B cell (primary cell): ENCODE measurements at regions of chr4 and their contacts with region 1.

Region 1: GRCh38 chr4:89929425-89930159 is 34.9 kb downstream of the MMRN1 start:
- DNase-seq: peak; percentile 6
- ATAC-seq: no peak
- H3K4me3 ChIP-seq: no peak overlapping the region
- H3K4me3 Mint-ChIP-seq: peak overlapping the region; percentile 19
- H3K27ac ChIP-seq: no peak overlapping the region
- H3K27ac Mint-ChIP-seq: no peak overlapping the region
- H3K4me1 ChIP-seq: peaks cover 0 to 8% of the 10 kb centered on the region in 2 donors
- H3K4me1 Mint-ChIP-seq: peaks cover 9% of the 10 kb centered on the region
- H3K27me3 ChIP-seq: no peaks in the 10 kb centered on the region
- H3K27me3 Mint-ChIP-seq: peaks cover 32% of the 10 kb centered on the region
- CTCF ChIP-seq: no peak

Region 2: DNA sequence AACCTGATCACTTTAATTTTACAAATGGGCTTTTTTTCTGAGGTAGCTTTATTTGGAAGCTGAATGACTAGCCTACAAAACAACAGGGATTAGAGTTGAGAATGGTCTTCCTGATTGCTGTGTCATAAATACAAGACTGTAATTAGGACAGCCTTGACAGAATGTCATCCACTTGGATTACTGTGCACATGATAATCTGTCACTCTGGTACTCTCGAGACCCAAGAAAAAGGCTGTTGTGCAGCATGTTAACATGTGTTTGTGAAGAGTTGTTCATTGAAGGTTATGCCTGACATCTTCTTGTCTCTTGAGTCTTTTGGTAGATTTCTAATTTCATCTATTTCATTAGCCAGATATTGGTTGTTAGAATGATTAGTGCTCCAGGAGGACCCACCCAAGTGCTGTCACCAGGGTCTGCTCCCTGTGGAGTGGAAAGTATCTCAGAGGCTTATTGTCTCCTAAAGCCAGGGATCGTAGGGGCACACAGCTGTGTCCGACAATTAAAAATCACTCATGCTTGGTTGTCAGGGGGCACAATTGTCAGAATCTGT is 409.7 kb before region 1 on chr4:
- CTCF ChIA-PET with region 1: no interaction called
- POLR2A ChIA-PET with region 1: no interaction called
- intact Hi-C with region 1: no loop called
- DNase-seq: no peak
- ATAC-seq: no peak
- H3K4me3 ChIP-seq: no peak overlapping the region
- H3K4me3 Mint-ChIP-seq: no peak overlapping the region
- H3K27ac ChIP-seq: no peak overlapping the region
- H3K27ac Mint-ChIP-seq: no peak overlapping the region
- H3K4me1 ChIP-seq: no peaks in the 10 kb centered on the region
- H3K4me1 Mint-ChIP-seq: no peaks in the 10 kb centered on the region
- H3K27me3 ChIP-seq: no peaks in the 10 kb centered on the region
- H3K27me3 Mint-ChIP-seq: peaks cover 11% of the 10 kb centered on the region
- CTCF ChIP-seq: no peak

Region 3: DNA sequence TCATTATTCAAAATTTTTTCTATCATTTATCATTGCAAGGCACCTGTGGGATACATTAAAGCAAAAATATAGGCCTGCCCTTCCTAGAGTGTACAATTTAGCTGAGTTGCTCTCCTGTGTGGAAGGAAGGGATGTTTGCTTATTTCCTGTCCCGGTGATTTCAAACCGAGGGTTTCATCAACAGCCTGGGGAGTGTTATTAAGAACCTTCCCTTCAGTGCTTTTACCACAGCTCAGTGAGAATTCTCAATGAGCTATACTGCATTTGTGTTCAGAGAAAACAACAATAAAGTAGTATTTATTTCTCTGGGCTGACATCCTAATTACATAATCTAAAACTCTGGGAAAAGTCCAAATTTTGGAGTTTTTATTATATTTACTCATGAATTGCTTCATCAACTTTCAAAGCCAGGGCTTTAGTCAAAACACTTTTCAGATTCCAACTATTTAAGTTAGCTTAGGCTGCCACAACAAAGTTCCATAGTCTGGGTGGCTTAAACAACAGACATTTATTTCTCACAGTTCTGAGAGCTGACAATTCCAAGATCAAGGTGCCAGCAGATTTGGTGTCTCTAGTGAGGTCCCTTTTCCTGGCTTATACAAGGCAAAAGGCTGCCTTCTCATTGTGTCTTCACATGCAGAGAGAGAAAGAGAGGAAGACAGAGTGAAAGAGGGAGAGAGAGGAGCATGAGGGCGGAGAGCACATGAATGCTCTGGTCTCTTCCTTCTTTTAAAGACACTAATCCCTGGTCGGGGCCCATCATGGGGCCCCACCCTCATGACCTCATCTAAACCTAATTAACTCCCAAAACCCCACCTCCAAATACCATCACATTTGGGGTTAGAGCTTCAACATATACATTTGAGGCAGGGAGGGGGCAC is 27.7 kb after region 1 on chr4:
- CTCF ChIA-PET with region 1: no interaction called
- POLR2A ChIA-PET with region 1: no interaction called
- intact Hi-C with region 1: no loop called
- DNase-seq: no peak
- ATAC-seq: no peak
- H3K4me3 ChIP-seq: no peak overlapping the region
- H3K4me3 Mint-ChIP-seq: no peak overlapping the region
- H3K27ac ChIP-seq: no peak overlapping the region
- H3K27ac Mint-ChIP-seq: no peak overlapping the region
- H3K4me1 ChIP-seq: no peaks in the 10 kb centered on the region
- H3K4me1 Mint-ChIP-seq: no peaks in the 10 kb centered on the region
- H3K27me3 ChIP-seq: peaks cover 0 to 5% (median 0%) of the 10 kb centered on the region in 4 experiments
- H3K27me3 Mint-ChIP-seq: no peaks in the 10 kb centered on the region
- CTCF ChIP-seq: no peak

Region 4: DNA sequence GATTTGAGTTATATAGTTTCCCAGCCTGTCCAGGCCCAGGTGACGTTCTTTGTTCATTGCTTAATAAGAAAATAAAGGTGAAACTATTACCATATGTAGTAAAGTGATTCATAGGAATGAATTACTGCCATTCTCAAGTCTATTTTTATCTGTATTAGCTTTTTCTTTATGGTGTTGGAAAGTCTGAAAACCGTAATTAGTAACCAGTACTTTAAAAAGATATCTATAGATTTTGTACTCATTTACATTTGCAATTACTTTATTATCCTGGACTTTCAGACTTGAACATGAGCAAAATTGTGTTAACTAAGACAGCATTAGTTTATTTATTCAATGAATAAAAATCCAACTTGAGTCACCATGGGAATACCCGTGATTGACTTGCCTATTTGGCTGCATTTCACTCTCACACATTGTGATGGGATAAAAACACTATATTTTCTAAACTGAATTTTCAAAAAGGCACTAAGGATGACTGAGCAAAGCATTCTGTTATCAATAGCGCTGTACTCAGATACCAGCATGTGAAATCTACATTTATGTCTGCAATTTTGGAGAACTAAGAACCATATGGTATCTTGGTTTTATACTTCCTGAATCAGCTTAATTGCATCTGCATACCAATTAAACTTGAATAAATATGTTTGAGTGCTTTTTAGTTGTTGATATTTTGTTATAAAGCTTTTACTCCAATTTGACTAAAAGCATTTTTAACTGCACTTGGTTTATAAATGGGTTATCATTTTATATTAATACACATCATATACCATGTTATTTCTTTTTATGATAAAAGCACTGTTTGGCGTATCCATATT is 352.2 kb after region 1 on chr4:
- CTCF ChIA-PET with region 1: no interaction called
- POLR2A ChIA-PET with region 1: no interaction called
- intact Hi-C with region 1: loop called (anchors 10 kb)
- DNase-seq: no peak
- ATAC-seq: no peak
- H3K4me3 ChIP-seq: no peak overlapping the region
- H3K4me3 Mint-ChIP-seq: no peak overlapping the region
- H3K27ac ChIP-seq: no peak overlapping the region
- H3K27ac Mint-ChIP-seq: no peak overlapping the region
- H3K4me1 ChIP-seq: peaks cover 0 to 4% of the 10 kb centered on the region in 2 donors
- H3K4me1 Mint-ChIP-seq: no peaks in the 10 kb centered on the region
- H3K27me3 ChIP-seq: no peaks in the 10 kb centered on the region
- H3K27me3 Mint-ChIP-seq: no peaks in the 10 kb centered on the region
- CTCF ChIP-seq: no peak